ENCODE measurements at regions of chr7 and their contacts with region 1.

Region 1: DNA sequence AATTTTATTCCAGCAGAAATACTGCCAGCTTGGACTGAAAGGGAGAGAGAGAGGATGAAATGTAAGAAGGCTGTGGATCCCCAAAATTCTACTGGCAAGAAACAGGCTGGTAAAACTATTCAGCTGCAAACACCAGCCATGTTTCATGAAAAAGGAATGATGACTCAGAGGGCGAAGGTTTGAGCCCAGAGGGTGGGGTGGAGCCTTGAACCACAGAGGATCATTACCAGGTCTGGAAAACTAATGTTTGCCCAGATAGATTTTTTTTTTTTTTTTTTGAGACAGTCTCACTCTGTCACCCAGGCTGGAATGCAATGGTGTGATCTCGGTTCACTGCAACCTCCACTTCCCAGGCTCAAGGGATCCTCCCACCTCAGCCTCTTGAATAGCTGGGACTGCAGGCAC is 41.7 kb upstream of the NRF1 start:
- DNase-seq: no peak
- ATAC-seq: no peak
- H3K4me3 ChIP-seq: no peak overlapping the region
- H3K4me3 Mint-ChIP-seq: no peak overlapping the region
- H3K27ac ChIP-seq: no peak overlapping the region
- H3K27ac Mint-ChIP-seq: no peak overlapping the region
- H3K4me1 ChIP-seq: no peaks in the 10 kb centered on the region
- H3K4me1 Mint-ChIP-seq: peaks cover 3 to 6% (median 3%) of the 10 kb centered on the region in 3 donors
- H3K27me3 ChIP-seq: peaks cover 0 to 5% of the 10 kb centered on the region in 2 experiments
- H3K27me3 Mint-ChIP-seq: peaks cover 11 to 16% of the 10 kb centered on the region in 2 donors

Region 2: DNA sequence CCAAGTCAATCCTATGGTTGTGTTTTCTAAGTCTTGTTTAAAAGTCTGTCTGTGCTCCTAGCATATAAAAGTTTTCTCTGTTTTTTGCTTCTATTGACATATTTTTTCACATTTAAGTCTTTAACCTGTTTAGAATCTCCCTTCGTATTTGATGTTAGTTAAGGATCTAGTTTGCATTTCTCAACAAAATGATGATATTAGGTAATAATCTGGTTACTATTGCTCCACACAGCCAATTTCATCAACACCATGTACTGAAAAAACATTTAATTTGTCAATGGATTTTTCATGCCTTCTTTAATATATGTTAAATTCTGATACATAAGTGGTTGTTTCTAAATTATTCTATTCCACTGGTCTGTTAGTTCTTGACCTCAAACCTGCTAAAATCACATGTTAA is 1134.0 kb after region 1 on chr7:
- CTCF ChIA-PET with region 1: no interaction called
- POLR2A ChIA-PET with region 1: interaction called in 1 of 2 experiments, 12 read pairs
- DNase-seq: no peak
- ATAC-seq: no peak
- H3K4me3 ChIP-seq: no peak overlapping the region
- H3K4me3 Mint-ChIP-seq: no peak overlapping the region
- H3K27ac ChIP-seq: no peak overlapping the region
- H3K27ac Mint-ChIP-seq: no peak overlapping the region
- H3K4me1 ChIP-seq: no peaks in the 10 kb centered on the region
- H3K4me1 Mint-ChIP-seq: no peaks in the 10 kb centered on the region
- H3K27me3 ChIP-seq: peaks cover 0 to under 1% of the 10 kb centered on the region in 2 experiments
- H3K27me3 Mint-ChIP-seq: peaks cover 24 to 30% of the 10 kb centered on the region in 2 donors

Measured in T-cell (primary cell).